Gastrocnemius medialis (tissue), 4 donors: ENCODE measurements at regions of chr3 and their contacts with region 1.

Region 1: DNA sequence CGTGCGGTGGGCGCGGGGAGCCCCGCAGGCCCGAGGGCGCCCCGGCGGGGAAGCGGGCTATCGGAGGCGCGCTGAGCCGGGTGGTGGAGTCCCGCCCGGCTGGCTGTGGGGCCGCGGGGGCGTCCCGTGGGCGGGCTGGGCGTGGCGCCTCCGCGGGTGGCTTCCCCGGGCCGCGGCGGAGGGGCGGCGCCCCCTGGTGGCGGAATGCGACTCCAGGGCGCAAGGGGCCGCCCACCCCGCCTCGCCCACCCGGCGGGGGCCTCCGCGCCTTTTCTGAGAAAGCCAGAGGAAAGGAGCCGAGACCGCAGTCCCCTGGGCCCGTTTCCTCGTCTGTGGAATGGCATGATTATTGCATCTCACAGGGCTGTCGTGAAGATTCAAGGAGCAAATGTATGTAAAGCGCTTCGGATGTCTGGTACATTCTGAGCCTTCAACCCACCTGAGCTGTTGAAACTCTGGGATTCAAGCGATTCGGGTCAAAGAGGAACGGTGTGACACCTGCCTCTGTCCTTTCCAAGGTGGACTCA is 31.9 kb upstream of the RAB6B start:
- DNase-seq: no peak
- ATAC-seq: peak; percentile 53 to 80
- H3K4me3 ChIP-seq: peak overlapping the region; percentile 28 to 80 (median 52)
- H3K27ac ChIP-seq: no peak overlapping the region
- H3K4me1 ChIP-seq: peaks cover 0 to 9% of the 10 kb centered on the region in 2 donors
- H3K27me3 ChIP-seq: peaks cover 0 to 2% (median 0%) of the 10 kb centered on the region in 3 donors
- CTCF ChIP-seq: peak; percentile 59 to 89 (median 85)
- POLR2A ChIP-seq: no peak

Region 2: DNA sequence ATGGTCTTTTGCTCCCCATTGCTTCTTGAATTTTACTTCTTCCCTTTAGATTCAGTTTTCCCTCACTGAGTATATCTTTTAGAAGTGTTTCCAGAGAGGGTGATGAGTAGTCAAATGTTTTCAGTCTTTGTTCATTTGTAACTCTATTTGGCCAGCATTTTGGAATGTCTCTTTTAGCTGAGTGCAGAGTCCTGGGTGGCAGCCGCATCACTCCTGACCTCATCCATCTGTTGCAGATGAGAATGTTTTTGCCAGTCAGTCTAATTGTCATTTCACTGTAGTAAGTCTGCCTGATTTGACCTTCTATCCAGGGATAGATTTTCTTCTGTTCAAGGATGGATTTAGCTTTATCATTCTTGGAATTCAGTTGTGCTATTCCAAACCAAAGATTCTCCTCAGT is 114.7 kb before region 1 on chr3:
- in situ Hi-C with region 1: loop called in 1 of 4 experiments (anchors 10 kb)
- intact Hi-C with region 1: no loop called
- DNase-seq: no peak
- ATAC-seq: no peak
- H3K4me3 ChIP-seq: no peak overlapping the region
- H3K27ac ChIP-seq: no peak overlapping the region
- H3K4me1 ChIP-seq: no peaks in the 10 kb centered on the region
- H3K27me3 ChIP-seq: no peaks in the 10 kb centered on the region
- CTCF ChIP-seq: no peak
- POLR2A ChIP-seq: no peak

Region 3: GRCh38 chr3:133821767-133822638 is 105.6 kb before region 1 on chr3:
- in situ Hi-C with region 1: loop called in 1 of 4 experiments (anchors 10 kb)
- intact Hi-C with region 1: loop called (anchors 1 kb)
- DNase-seq: peak in 1 of 2 donors; percentile 52
- ATAC-seq: peak in 1 of 2 donors; percentile 53
- H3K4me3 ChIP-seq: no peak overlapping the region
- H3K27ac ChIP-seq: no peak overlapping the region
- H3K4me1 ChIP-seq: no peaks in the 10 kb centered on the region
- H3K27me3 ChIP-seq: no peaks in the 10 kb centered on the region
- CTCF ChIP-seq: no peak
- POLR2A ChIP-seq: no peak

Region 4: GRCh38 chr3:134029734-134030378 is 102.3 kb after region 1 on chr3 and contains the start of gene SLCO2A1:
- in situ Hi-C with region 1: no loop called
- intact Hi-C with region 1: loop called (anchors 10 kb)
- DNase-seq: no peak
- ATAC-seq: peak; percentile 19 to 41
- H3K4me3 ChIP-seq: peak within 1 kb of the TSS; percentile 46 to 70 (median 62)
- H3K27ac ChIP-seq: no peak within 1 kb of the TSS
- H3K4me1 ChIP-seq: peaks cover 0 to 7% of the 10 kb centered on the region in 2 donors
- H3K27me3 ChIP-seq: peaks cover 7 to 25% (median 21%) of the 10 kb centered on the region in 3 donors
- CTCF ChIP-seq: no peak
- POLR2A ChIP-seq: no peak
- total RNA-seq, gene SLCO2A1: 0.07 to 2.4 (median 1.3) TPM

Region 5: GRCh38 chr3:134106580-134106979 is 179.0 kb after region 1 on chr3:
- in situ Hi-C with region 1: no loop called
- intact Hi-C with region 1: no loop called
- DNase-seq: no peak
- ATAC-seq: no peak
- H3K4me3 ChIP-seq: no peak overlapping the region
- H3K27ac ChIP-seq: no peak overlapping the region
- H3K4me1 ChIP-seq: no peaks in the 10 kb centered on the region
- H3K27me3 ChIP-seq: no peaks in the 10 kb centered on the region
- CTCF ChIP-seq: no peak
- POLR2A ChIP-seq: no peak

Region 6: DNA sequence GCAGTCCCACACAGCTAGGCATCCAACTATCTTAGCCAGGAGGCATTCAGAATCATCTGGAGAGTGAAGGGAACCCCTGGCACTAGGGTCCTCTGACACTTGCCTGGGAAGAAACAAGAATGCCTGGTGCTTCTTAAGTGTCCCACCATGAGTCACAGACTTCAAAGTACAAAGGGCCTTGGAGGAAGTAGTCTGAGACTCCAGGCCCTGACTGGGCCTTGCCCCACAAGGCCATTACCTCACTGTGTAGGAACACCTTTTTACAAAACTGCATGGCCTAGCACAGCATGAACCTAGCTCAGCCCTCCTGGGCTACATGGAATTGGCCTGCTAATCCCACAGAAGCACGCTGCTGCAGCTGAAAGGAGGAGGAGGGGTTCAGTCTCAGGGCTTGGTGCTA is 206.6 kb after region 1 on chr3:
- in situ Hi-C with region 1: no loop called
- intact Hi-C with region 1: no loop called
- DNase-seq: no peak
- ATAC-seq: no peak
- H3K4me3 ChIP-seq: no peak overlapping the region
- H3K27ac ChIP-seq: no peak overlapping the region
- H3K4me1 ChIP-seq: no peaks in the 10 kb centered on the region
- H3K27me3 ChIP-seq: no peaks in the 10 kb centered on the region
- CTCF ChIP-seq: no peak
- POLR2A ChIP-seq: no peak

Region 7: DNA sequence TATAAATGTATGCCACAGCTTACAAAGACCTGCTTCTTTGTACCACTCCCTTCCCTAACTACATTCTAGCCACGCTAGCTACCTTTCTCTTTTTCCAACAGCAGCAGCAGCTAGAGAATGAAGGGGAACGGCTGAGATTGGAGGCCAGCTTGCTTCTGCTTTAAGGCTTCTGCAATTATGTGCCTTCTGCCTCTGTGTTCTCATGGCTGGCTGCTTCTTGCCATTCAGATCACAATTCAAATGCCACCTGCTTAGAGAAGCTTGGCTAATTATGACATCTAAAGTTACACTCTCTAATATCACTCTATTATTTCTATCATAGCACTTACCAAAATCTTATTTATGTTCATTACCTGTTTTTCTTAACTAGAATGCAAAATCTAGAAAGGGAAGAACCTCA is 227.8 kb after region 1 on chr3:
- in situ Hi-C with region 1: no loop called
- intact Hi-C with region 1: no loop called
- DNase-seq: no peak
- ATAC-seq: no peak
- H3K4me3 ChIP-seq: no peak overlapping the region
- H3K27ac ChIP-seq: no peak overlapping the region
- H3K4me1 ChIP-seq: no peaks in the 10 kb centered on the region
- H3K27me3 ChIP-seq: no peaks in the 10 kb centered on the region
- CTCF ChIP-seq: no peak
- POLR2A ChIP-seq: no peak